Activated CD4-positive, alpha-beta T cell treated with anti-CD3 and anti-CD28 coated beads for 36 hours (primary cell): ENCODE measurements at regions of chr12 and their contacts with region 1.

Region 1: GRCh38 chr12:72057330-72057914 is 118.8 kb downstream of the TPH2 start:
- DNase-seq: no peak
- ATAC-seq: no peak
- H3K4me3 Mint-ChIP-seq: no peak overlapping the region
- H3K27ac Mint-ChIP-seq: no peak overlapping the region
- H3K4me1 Mint-ChIP-seq: no peaks in the 10 kb centered on the region
- H3K27me3 Mint-ChIP-seq: peaks cover 5% of the 10 kb centered on the region

Region 2: DNA sequence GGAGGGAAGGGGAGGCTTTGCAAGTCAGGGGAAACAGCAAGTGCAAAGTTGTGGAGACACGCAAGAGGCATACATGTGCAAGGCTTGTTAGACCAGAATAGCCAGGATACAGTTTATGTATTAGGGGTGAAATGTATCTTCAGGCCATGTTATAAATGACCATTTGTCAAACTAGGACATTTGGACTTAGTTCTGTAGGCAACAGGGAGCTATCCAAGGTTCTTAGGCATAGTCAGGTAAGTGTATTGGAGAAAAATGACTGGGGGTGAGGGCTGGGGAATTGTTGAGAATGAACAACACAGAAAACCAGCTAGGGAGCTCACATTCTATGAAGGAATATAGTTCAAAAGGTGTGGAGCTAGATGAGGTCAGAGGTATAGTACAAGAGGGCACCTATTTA is 76.3 kb before region 1 on chr12:
- CTCF ChIA-PET with region 1: no interaction called
- POLR2A ChIA-PET with region 1: no interaction called
- intact Hi-C with region 1: no loop called
- DNase-seq: no peak
- ATAC-seq: no peak
- H3K4me3 Mint-ChIP-seq: no peak overlapping the region
- H3K27ac Mint-ChIP-seq: no peak overlapping the region
- H3K4me1 Mint-ChIP-seq: no peaks in the 10 kb centered on the region
- H3K27me3 Mint-ChIP-seq: peaks cover 2% of the 10 kb centered on the region

Region 3: GRCh38 chr12:73678353-73678752 is 1620.9 kb after region 1 on chr12:
- CTCF ChIA-PET with region 1: no interaction called
- POLR2A ChIA-PET with region 1: no interaction called
- intact Hi-C with region 1: loop called in 1 of 2 experiments (anchors 5 kb)
- DNase-seq: no peak
- ATAC-seq: no peak
- H3K4me3 Mint-ChIP-seq: no peak overlapping the region
- H3K27ac Mint-ChIP-seq: no peak overlapping the region
- H3K4me1 Mint-ChIP-seq: no peaks in the 10 kb centered on the region
- H3K27me3 Mint-ChIP-seq: no peaks in the 10 kb centered on the region